AG04450 (cell line): ENCODE measurements at regions of chr5 and their contacts with region 1.

Region 1: DNA sequence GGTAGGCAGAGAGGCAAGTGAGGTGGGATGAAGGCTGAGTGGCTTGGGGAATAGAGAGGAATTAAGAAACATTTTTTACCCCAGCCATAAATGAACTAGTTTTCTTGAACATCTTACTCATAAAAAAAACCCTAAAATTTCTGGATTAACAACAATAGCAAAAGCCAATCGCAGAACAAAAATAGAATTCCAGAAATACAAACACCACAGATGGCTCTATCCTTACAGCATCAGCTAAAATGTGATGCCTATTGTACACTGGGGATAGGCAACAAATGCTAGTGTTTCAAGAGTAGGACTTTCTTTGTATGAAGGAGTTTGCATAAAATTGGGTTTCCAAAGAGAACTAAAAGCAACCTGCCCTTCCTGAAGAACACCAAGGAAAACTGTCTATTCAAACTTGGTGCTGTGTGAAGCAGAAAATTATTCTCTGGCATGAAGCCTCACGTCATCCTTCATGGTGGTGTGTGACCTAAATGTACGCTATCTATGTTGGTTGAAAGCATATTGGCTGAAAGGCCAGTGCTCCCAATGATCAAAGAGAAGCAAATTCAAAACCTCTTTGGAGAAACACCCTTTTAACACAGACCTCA is 82.9 kb downstream of the JAKMIP2 start:
- DNase-seq: no peak
- H3K4me3 ChIP-seq: no peak overlapping the region
- H3K27ac ChIP-seq: no peak overlapping the region
- H3K27me3 ChIP-seq: no peaks in the 10 kb centered on the region
- CTCF ChIP-seq: no peak

Region 2: DNA sequence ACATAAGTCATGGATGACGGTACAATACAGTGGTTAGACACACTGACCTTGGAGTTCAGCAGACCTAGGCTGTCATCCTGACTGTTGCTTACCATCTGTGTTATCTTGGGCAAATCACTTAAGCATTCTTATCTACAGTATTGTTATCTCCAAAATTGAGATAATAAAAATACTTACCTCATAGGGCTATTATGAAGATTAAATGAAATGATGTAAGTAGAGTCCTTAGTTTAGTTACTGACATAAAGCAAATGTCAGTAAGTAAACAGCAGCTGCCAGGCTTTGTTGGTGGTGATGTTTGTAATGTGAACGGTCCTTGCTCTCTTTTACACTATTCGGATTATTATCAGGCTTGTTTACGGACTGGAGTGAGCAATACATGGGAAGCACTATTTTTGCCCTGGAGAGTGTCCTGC is 82.4 kb before region 1 on chr5:
- CTCF ChIA-PET with region 1: interaction called, 11 read pairs
- POLR2A ChIA-PET with region 1: no interaction called
- DNase-seq: no peak
- H3K4me3 ChIP-seq: no peak overlapping the region
- H3K27ac ChIP-seq: no peak overlapping the region
- H3K27me3 ChIP-seq: peaks cover 3% of the 10 kb centered on the region
- CTCF ChIP-seq: no peak

Region 3: DNA sequence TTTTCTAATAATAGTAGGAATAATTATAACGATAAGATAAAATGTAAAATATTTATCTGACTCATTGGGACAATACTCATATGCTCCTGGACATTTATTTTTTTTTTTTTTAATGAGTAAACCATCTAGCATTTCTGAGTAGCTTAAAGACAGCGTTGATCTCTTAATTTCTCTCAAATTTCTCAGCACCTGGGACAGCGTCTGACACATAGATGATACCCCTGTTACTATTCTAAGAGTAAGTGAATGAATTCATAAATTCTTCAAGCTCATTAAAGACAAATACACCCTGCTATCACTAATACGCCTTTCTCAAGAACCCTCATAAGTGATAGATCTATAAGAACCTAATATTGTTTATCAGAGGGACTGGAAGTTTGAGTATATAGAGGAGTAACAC is 966.8 kb after region 1 on chr5:
- CTCF ChIA-PET with region 1: interaction called, 10 read pairs
- POLR2A ChIA-PET with region 1: no interaction called
- DNase-seq: no peak
- H3K4me3 ChIP-seq: no peak overlapping the region
- H3K27ac ChIP-seq: no peak overlapping the region
- H3K27me3 ChIP-seq: no peaks in the 10 kb centered on the region
- CTCF ChIP-seq: no peak